Naive thymus-derived CD4-positive, alpha-beta T cell (primary cell): ENCODE measurements at regions of chr5 and their contacts with region 1.

Region 1: GRCh38 chr5:87780831-87781760 is 368.4 kb upstream of the CCNH start:
- DNase-seq: peak; percentile 41 to 80 (median 68)
- ATAC-seq: peak; percentile 98
- H3K4me3 ChIP-seq: no peak overlapping the region
- H3K4me3 Mint-ChIP-seq: no peak overlapping the region
- H3K27ac ChIP-seq: no peak overlapping the region
- H3K27ac Mint-ChIP-seq: no peak overlapping the region
- H3K4me1 ChIP-seq: no peaks in the 10 kb centered on the region
- H3K4me1 Mint-ChIP-seq: peaks cover 0 to 4% (median 0%) of the 10 kb centered on the region in 7 donors
- H3K27me3 ChIP-seq: peaks cover 0 to 6% of the 10 kb centered on the region in 2 donors
- H3K27me3 Mint-ChIP-seq: peaks cover 18 to 55% (median 46%) of the 10 kb centered on the region in 5 donors

Region 2: GRCh38 chr5:86880785-86881492 is 900.2 kb before region 1 on chr5:
- CTCF ChIA-PET with region 1: no interaction called
- POLR2A ChIA-PET with region 1: no interaction called
- intact Hi-C with region 1: loop called in 1 of 2 experiments (anchors 5 kb)
- DNase-seq: peak in 8 of 9 donors; percentile 11 to 45 (median 28)
- ATAC-seq: peak; percentile 86
- H3K4me3 ChIP-seq: no peak overlapping the region
- H3K4me3 Mint-ChIP-seq: no peak overlapping the region
- H3K27ac ChIP-seq: no peak overlapping the region
- H3K27ac Mint-ChIP-seq: no peak overlapping the region
- H3K4me1 ChIP-seq: no peaks in the 10 kb centered on the region
- H3K4me1 Mint-ChIP-seq: no peaks in the 10 kb centered on the region
- H3K27me3 ChIP-seq: no peaks in the 10 kb centered on the region
- H3K27me3 Mint-ChIP-seq: peaks cover 0 to 19% (median 7%) of the 10 kb centered on the region in 5 donors

Region 3: DNA sequence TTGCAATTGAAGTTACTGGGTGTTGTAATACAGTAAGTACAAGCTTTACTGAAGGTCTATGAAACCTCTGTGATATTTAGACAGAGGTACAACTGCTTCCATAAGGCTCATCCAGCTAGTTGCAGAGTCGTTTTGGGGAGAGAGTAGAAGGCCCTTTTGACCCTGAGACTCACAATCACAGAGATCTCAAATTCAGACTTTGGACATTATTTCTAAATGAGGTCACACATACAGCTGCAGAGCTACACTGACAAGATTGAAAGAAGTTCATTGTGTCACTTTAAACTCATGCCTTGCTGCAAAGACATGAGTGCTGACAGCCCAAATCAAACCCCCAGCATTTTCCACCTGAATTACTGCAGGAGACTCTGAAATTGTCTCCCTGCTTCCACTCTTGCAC is 693.5 kb after region 1 on chr5:
- CTCF ChIA-PET with region 1: no interaction called
- POLR2A ChIA-PET with region 1: no interaction called
- intact Hi-C with region 1: loop called in 1 of 2 experiments (anchors 10 kb)
- DNase-seq: no peak
- ATAC-seq: no peak
- H3K4me3 ChIP-seq: no peak overlapping the region
- H3K4me3 Mint-ChIP-seq: no peak overlapping the region
- H3K27ac ChIP-seq: no peak overlapping the region
- H3K27ac Mint-ChIP-seq: no peak overlapping the region
- H3K4me1 ChIP-seq: no peaks in the 10 kb centered on the region
- H3K4me1 Mint-ChIP-seq: no peaks in the 10 kb centered on the region
- H3K27me3 ChIP-seq: no peaks in the 10 kb centered on the region
- H3K27me3 Mint-ChIP-seq: peaks cover 3 to 44% (median 23%) of the 10 kb centered on the region in 5 donors

Region 4: GRCh38 chr5:88680253-88681132 is 899.4 kb after region 1 on chr5:
- CTCF ChIA-PET with region 1: interaction called, 3 read pairs
- POLR2A ChIA-PET with region 1: no interaction called
- intact Hi-C with region 1: loop called (anchors 1 kb)
- DNase-seq: peak; percentile 53 to 87 (median 77)
- ATAC-seq: peak; percentile 93
- H3K4me3 ChIP-seq: peak overlapping the region; percentile 36
- H3K4me3 Mint-ChIP-seq: peak overlapping the region; percentile 30 to 65 (median 58)
- H3K27ac ChIP-seq: no peak overlapping the region
- H3K27ac Mint-ChIP-seq: peak overlapping the region in 2 of 9 donors; percentile 25 to 30
- H3K4me1 ChIP-seq: peaks cover 0 to 6% of the 10 kb centered on the region in 2 donors
- H3K4me1 Mint-ChIP-seq: peaks cover 15 to 37% (median 25%) of the 10 kb centered on the region in 7 donors
- H3K27me3 ChIP-seq: peaks cover 32 to 60% of the 10 kb centered on the region in 2 donors
- H3K27me3 Mint-ChIP-seq: peaks cover 78 to 92% (median 80%) of the 10 kb centered on the region in 5 donors

Region 5: GRCh38 chr5:88724201-88724600 is 943.1 kb after region 1 on chr5:
- CTCF ChIA-PET with region 1: interaction called, 4 read pairs
- POLR2A ChIA-PET with region 1: no interaction called
- intact Hi-C with region 1: loop called (anchors 1 kb)
- DNase-seq: no peak
- ATAC-seq: no peak
- H3K4me3 ChIP-seq: no peak overlapping the region
- H3K4me3 Mint-ChIP-seq: no peak overlapping the region
- H3K27ac ChIP-seq: no peak overlapping the region
- H3K27ac Mint-ChIP-seq: no peak overlapping the region
- H3K4me1 ChIP-seq: no peaks in the 10 kb centered on the region
- H3K4me1 Mint-ChIP-seq: no peaks in the 10 kb centered on the region
- H3K27me3 ChIP-seq: no peaks in the 10 kb centered on the region
- H3K27me3 Mint-ChIP-seq: peaks cover 3 to 39% (median 23%) of the 10 kb centered on the region in 5 donors